ENCODE measurements at regions of chr6 and their contacts with region 1.

Region 1: GRCh38 chr6:125974214-125974866 is 12.0 kb upstream of the TRMT11 start:
- DNase-seq: peak; percentile 56
- ATAC-seq: peak; percentile 69
- H3K4me3 ChIP-seq: no peak overlapping the region
- H3K27ac ChIP-seq: no peak overlapping the region
- H3K4me1 ChIP-seq: no peaks in the 10 kb centered on the region
- H3K27me3 ChIP-seq: no peaks in the 10 kb centered on the region
- CTCF ChIP-seq: peak; percentile 65
- EP300 ChIP-seq: no peak
- POLR2A ChIP-seq: no peak
- RAD21 ChIP-seq: no peak

Region 2: DNA sequence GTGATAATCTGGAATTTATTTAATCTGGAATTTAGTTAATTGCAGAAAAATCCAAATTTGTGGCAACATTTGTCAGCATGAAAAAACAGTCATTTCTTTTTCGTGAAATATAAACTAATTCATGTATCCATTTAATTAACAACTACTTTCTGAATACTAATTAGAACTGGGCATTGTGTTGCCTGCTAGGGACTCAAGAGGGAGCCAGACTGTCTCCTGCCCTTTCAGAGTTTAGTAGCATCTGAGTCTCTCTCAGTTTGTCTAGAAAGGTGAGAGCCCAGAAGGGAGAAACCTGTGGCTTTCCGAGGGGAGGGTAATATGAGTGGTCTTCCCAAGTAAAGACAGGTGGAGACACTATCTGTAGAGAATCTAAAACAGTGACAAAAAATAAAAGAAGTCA is 461.7 kb before region 1 on chr6:
- CTCF ChIA-PET with region 1: no interaction called
- POLR2A ChIA-PET with region 1: no interaction called
- in situ Hi-C with region 1: no loop called
- intact Hi-C with region 1: loop called (anchors 5 kb)
- DNase-seq: peak; percentile 12
- ATAC-seq: peak; percentile 84
- H3K4me3 ChIP-seq: no peak overlapping the region
- H3K27ac ChIP-seq: no peak overlapping the region
- H3K4me1 ChIP-seq: peaks cover 16% of the 10 kb centered on the region
- H3K27me3 ChIP-seq: no peaks in the 10 kb centered on the region; a peak in 1 of 5 replicates
- CTCF ChIP-seq: peak; percentile 37; the same call in 1 of the 2 replicates
- EP300 ChIP-seq: no peak
- POLR2A ChIP-seq: no peak
- RAD21 ChIP-seq: no peak

Region 3: GRCh38 chr6:125858427-125859320 is 115.7 kb before region 1 on chr6:
- CTCF ChIA-PET with region 1: interaction called, 30 read pairs
- POLR2A ChIA-PET with region 1: no interaction called
- in situ Hi-C with region 1: no loop called
- intact Hi-C with region 1: loop called (anchors 1 kb)
- DNase-seq: peak; percentile 80
- ATAC-seq: peak; percentile 100
- H3K4me3 ChIP-seq: no peak overlapping the region
- H3K27ac ChIP-seq: no peak overlapping the region
- H3K4me1 ChIP-seq: no peaks in the 10 kb centered on the region
- H3K27me3 ChIP-seq: no peaks in the 10 kb centered on the region
- CTCF ChIP-seq: peak; percentile 97
- EP300 ChIP-seq: no peak
- POLR2A ChIP-seq: no peak
- RAD21 ChIP-seq: peak; percentile 89

Region 4: GRCh38 chr6:126199466-126199865 is 225.1 kb after region 1 on chr6:
- CTCF ChIA-PET with region 1: no interaction called
- POLR2A ChIA-PET with region 1: no interaction called
- in situ Hi-C with region 1: no loop called
- intact Hi-C with region 1: no loop called
- DNase-seq: no peak
- ATAC-seq: no peak
- H3K4me3 ChIP-seq: no peak overlapping the region
- H3K27ac ChIP-seq: no peak overlapping the region
- H3K4me1 ChIP-seq: no peaks in the 10 kb centered on the region
- H3K27me3 ChIP-seq: no peaks in the 10 kb centered on the region
- CTCF ChIP-seq: no peak
- EP300 ChIP-seq: no peak
- POLR2A ChIP-seq: no peak
- RAD21 ChIP-seq: no peak

Region 5: GRCh38 chr6:126293891-126294524 is 319.7 kb after region 1 on chr6:
- CTCF ChIA-PET with region 1: no interaction called
- POLR2A ChIA-PET with region 1: no interaction called
- in situ Hi-C with region 1: no loop called
- intact Hi-C with region 1: no loop called
- DNase-seq: no peak
- ATAC-seq: no peak
- H3K4me3 ChIP-seq: no peak overlapping the region
- H3K27ac ChIP-seq: no peak overlapping the region
- H3K4me1 ChIP-seq: no peaks in the 10 kb centered on the region
- H3K27me3 ChIP-seq: no peaks in the 10 kb centered on the region
- CTCF ChIP-seq: no peak
- EP300 ChIP-seq: no peak
- POLR2A ChIP-seq: no peak
- RAD21 ChIP-seq: no peak

Measured in HepG2 (cell line).